Mammary epithelial cell (primary cell): ENCODE measurements at regions of chr11 and their contacts with region 1.

Region 1: DNA sequence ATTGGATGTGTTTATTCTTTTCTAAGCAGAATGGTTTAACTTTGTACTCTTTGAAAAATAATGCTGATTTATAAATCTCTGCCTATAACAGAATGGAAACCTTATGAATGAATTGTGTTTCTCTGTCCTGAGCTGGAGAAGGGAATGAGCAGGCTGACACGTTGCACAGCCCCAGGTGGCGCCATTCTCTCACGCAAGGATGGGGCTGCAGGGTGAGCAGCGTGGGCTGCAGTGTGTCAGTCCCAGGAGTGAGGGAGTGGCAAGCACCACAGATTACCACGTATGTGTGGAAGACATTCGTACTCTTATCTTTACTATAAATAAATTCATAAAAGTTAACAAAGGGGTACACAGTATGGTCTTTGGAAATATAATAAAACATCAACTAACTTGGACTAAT is 33.4 kb downstream of the FDX1 start:
- DNase-seq: no peak
- H3K4me3 ChIP-seq: no peak overlapping the region
- H3K27ac ChIP-seq: no peak overlapping the region
- H3K4me1 ChIP-seq: no peaks in the 10 kb centered on the region
- H3K27me3 ChIP-seq: no peaks in the 10 kb centered on the region
- CTCF ChIP-seq: peak; percentile 39 to 67

Region 2: GRCh38 chr11:110525883-110526282 is 62.7 kb after region 1 on chr11:
- CTCF ChIA-PET with region 1: no interaction called
- dilution Hi-C with region 1: no loop called
- in situ Hi-C with region 1: no loop called
- intact Hi-C with region 1: loop called (anchors 1 kb)
- DNase-seq: peak; percentile 97
- H3K4me3 ChIP-seq: no peak overlapping the region
- H3K27ac ChIP-seq: peak overlapping the region; percentile 17
- H3K4me1 ChIP-seq: peaks cover 17% of the 10 kb centered on the region
- H3K27me3 ChIP-seq: no peaks in the 10 kb centered on the region
- CTCF ChIP-seq: no peak

Region 3: DNA sequence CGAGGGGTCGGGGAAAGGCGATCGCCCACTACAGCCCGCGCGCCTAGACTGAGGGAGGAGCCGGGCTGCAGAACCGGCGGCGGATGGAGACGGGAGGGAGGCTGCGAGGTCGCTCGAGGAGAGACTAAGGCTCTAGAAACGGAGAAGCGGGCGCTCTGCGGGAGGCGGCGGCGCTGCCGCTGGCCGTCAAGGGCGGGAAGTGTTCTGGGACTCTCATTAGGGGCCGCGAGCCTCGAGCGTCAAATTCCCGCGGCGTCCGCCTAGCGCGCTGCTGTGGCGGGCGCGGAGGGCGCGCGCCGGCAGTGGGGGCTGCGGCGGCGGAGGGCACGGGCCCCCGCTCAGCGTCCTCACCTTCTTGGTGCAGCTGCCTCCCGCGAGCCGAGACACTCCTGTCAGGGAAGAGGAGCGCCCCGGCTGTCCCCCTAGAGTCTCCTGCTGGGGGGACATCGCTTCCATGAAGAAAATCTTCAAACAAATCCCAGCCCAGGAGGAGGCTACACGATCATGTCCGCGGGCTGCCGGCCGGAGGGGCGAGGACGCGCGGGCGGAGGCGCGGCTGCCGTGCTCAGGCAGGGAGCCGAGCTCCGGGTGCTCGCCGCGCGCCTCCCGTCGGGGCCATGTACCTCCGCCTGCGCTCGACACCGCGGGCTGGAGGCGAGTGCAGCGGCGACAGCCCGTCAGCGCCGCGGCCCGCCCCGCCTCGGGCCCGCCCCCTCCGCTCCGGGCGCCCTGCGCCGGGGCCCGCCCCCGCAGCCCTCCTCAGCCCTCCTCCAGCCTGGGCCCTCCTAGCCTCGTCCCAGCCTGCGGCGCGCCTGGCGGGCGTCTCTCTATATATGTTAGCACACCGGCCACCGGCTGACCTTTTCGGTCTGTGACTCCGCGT is 248.9 kb after region 1 on chr11 and contains the start of gene ARHGAP20:
- CTCF ChIA-PET with region 1: no interaction called
- dilution Hi-C with region 1: no loop called
- in situ Hi-C with region 1: no loop called
- intact Hi-C with region 1: loop called (anchors 10 kb)
- DNase-seq: peak; percentile 28
- H3K4me3 ChIP-seq: peak within 1 kb of the TSS; percentile 20 to 26 (median 23)
- H3K27ac ChIP-seq: no peak within 1 kb of the TSS
- H3K4me1 ChIP-seq: peaks cover 14% of the 10 kb centered on the region
- H3K27me3 ChIP-seq: peaks cover 59% of the 10 kb centered on the region
- CTCF ChIP-seq: no peak
- total RNA-seq, gene ARHGAP20: 0.17 TPM in 1 of 2 donors, not detected in the other